ENCODE measurements at regions of chr1 and their contacts with region 1.

Region 1: DNA sequence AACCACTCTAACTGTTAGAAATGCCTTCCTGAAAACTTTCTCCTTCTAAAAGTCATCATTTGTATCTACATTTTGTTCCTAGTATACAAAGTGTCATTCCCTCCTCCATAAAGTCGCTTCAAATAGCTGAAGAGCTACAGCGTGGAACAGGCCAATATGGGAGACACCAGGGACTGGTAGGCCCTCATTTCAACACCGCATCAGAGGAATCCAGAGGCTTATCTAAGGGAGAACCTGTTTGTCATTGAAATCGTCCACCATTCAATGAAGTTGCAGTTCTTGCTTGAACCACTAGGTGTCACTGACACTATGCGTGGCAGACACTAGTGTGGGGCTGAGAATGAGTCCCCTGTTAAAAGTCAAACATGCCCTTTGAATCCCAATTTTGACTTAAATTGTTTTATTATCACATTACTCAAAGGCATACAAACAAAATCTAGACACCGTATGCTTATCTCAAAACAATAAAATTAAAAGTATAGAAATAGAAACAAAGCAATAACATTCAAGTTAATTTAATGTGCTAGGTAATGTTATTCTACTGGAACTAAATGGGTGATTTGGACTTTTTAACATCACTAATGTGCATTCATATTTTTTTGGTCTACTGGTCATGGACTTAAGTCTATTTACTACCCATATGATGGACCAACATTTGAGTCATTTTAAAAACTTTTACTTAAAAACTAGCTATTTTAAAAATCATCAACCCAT is 182.3 kb downstream of the FCRL5 start:
- DNase-seq: peak; percentile 65
- ATAC-seq: peak; percentile 47
- H3K4me3 Mint-ChIP-seq: no peak overlapping the region
- H3K27ac Mint-ChIP-seq: no peak overlapping the region
- H3K4me1 Mint-ChIP-seq: peaks cover 2% of the 10 kb centered on the region
- H3K27me3 Mint-ChIP-seq: peaks cover 7% of the 10 kb centered on the region

Region 2: GRCh38 chr1:157288996-157289395 is 81.0 kb before region 1 on chr1:
- CTCF ChIA-PET with region 1: no interaction called
- POLR2A ChIA-PET with region 1: no interaction called
- DNase-seq: no peak
- ATAC-seq: no peak
- H3K4me3 Mint-ChIP-seq: no peak overlapping the region
- H3K27ac Mint-ChIP-seq: no peak overlapping the region
- H3K4me1 Mint-ChIP-seq: no peaks in the 10 kb centered on the region
- H3K27me3 Mint-ChIP-seq: peaks cover 19% of the 10 kb centered on the region

Region 3: DNA sequence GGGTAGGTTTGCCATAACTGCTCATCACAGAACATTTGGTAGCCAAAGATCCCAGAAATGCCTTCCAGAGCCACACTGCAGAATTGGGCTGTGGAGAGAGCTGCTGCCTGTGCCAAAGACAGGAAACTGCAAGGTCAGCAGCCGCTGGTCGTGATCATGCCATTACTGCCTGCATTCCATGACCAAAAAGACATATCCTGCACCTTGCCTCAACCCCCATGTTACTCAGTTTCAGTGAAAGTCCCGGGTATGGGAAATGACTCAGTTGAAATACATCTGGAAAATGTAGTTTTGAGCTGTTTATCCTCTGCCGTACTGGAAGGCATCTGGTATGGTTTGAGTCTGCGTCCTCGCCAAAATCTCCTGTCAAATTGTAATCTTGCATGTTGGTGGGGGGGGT is 20.7 kb after region 1 on chr1:
- CTCF ChIA-PET with region 1: no interaction called
- POLR2A ChIA-PET with region 1: no interaction called
- DNase-seq: no peak
- ATAC-seq: no peak
- H3K4me3 Mint-ChIP-seq: no peak overlapping the region
- H3K27ac Mint-ChIP-seq: no peak overlapping the region
- H3K4me1 Mint-ChIP-seq: no peaks in the 10 kb centered on the region
- H3K27me3 Mint-ChIP-seq: peaks cover 44% of the 10 kb centered on the region

Region 4: GRCh38 chr1:157487096-157487495 is 117.1 kb after region 1 on chr1:
- CTCF ChIA-PET with region 1: interaction called, 41 read pairs
- POLR2A ChIA-PET with region 1: no interaction called
- DNase-seq: no peak
- ATAC-seq: no peak
- H3K4me3 Mint-ChIP-seq: no peak overlapping the region
- H3K27ac Mint-ChIP-seq: no peak overlapping the region
- H3K4me1 Mint-ChIP-seq: peaks cover 15% of the 10 kb centered on the region
- H3K27me3 Mint-ChIP-seq: peaks cover 16% of the 10 kb centered on the region

Region 5: DNA sequence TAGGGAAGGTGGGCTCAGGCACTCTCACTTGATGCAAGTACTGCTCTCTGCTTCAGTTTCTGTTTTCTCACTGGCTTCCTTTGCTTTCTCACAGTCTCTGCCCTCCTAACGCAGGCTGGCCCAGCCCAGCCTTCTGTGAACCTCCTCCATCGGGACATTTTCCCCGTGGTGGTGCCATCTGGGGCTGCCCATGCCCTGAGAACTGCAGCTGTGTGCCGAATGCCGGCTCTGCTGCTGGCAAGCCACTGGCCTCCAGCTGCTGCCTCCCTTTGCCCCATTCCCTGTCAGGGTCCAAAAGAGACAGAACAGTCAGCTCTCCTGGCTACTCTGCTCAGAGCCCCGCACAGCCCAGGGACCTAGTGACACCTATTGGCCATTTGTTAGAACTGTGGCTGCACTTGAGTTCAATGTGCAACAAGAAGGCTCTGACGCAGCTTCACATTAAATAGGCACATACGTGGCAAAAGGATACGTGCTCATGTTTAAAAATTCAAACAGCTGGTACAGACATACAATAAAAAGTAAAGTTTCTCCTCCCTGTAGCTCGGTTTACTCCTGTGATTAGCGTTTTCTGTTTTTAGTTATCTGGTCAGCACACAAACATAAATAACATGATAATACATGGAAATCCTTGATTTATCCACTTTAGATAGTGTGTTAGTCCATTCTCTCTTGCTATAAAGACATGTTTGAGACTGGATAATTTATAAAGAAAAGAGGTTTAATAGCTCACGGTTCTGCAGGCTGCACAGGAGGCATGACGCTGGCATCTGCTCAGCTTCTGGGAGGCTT is 135.7 kb after region 1 on chr1:
- CTCF ChIA-PET with region 1: interaction called, 14 read pairs
- POLR2A ChIA-PET with region 1: no interaction called
- DNase-seq: peak; percentile 51
- ATAC-seq: peak; percentile 88
- H3K4me3 Mint-ChIP-seq: no peak overlapping the region
- H3K27ac Mint-ChIP-seq: no peak overlapping the region
- H3K4me1 Mint-ChIP-seq: no peaks in the 10 kb centered on the region
- H3K27me3 Mint-ChIP-seq: peaks cover 13% of the 10 kb centered on the region

Measured in activated CD8-positive, alpha-beta T cell treated with anti-CD3 and anti-CD28 coated beads, Interleukin-2, amount 10 ng/mL, durations not matched to agents 7 days and 5 days (primary cell).